HEK293T (cell line): ENCODE measurements at regions of chr11 and their contacts with region 1.

Region 1: DNA sequence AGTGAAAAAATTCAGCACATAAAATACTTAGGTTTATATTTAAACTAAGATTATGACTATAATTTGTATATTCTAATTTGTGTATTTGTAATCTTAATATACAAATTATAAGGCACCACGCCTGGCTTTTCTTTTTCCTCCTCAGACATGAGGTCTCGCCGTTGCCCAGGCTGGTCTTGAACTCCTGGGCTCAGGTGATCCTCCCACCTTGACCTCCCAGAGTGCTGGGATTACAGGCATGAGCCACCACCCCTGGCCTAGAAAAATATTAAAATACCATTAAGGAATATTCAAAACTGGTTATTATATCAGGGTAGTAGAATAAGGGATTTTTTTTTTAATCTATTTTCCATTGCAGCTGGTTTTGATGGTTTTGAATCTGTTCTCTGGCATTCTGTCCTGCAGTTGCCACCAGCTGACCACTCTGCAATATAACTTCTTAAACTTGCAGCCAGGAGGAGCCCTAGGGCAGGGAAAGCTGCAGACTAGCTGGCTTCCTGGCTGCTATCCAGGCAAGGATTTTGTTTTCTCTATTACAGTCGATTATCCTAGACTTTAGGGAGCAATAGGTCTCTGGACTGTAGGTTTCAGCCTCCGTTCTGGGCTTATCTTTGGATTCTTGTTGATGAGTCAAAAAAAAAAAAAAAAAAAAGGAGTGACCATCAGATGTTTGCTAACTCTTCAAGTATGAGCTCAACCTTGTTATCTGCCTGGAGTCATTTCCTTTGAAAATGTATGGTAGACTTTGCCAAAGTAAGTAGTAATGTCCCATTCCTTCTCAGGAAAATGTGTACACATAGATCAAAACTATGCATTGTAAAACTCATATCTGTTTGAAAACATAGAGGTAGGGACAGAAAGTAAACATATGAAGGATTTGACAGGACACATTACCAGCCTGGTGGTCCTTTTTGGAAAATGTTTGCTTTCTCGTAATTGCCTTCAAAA is 13.2 kb downstream of the POLA2 start:
- DNase-seq: peak; percentile 68

Region 2: GRCh38 chr11:65314501-65315203 is 39.6 kb after region 1 on chr11 and contains the start of gene CDC42EP2:
- CTCF ChIA-PET with region 1: interaction called, 39 read pairs
- POLR2A ChIA-PET with region 1: interaction called, 7 read pairs
- DNase-seq: peak; percentile 89